Astrocyte of the cerebellum (primary cell): ENCODE measurements at regions of chr10 and their contacts with region 1.

Region 1: DNA sequence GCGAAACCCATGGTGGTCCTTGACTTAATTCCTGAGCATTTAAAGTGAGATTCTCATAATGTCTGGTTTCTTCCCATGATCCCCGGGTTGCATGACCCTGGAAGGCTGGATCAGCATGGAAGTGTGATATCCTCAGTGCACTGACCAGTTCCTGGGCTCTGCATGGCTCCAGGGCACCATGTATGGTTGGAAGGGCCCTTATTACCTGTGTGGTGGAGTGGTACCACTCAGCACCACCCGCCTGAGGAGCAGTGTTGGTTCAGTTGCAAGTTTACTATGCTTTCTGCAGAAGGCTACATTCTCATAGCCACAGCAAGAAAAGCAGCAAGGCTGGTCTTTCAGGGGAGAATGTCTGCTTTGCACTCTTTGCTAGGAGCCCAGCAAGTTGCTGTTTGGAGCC is 325.7 kb upstream of the MKI67 start:
- DNase-seq: no peak
- H3K4me3 ChIP-seq: no peak overlapping the region
- CTCF ChIP-seq: no peak

Region 2: GRCh38 chr10:128161031-128161430 is 290.8 kb before region 1 on chr10:
- in situ Hi-C with region 1: no loop called
- DNase-seq: no peak
- H3K4me3 ChIP-seq: no peak overlapping the region
- CTCF ChIP-seq: no peak

Region 3: DNA sequence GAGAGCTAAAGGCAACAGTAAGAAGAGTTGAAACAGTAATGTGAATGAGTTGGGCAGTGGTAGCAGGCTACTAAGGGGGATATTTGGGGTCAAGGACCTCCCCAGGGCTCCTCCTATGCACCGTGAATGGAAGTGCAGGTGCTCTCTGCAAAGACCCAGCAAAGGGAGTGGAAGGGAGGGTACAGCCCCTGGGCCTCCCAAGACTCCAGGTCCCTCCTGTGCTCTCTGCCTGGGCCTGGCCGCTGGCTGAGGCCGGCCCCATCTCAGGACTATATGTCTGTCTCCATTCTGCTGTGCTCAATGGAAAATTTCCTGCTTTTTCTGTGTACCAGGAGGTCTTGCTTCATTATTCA is 46.5 kb after region 1 on chr10:
- in situ Hi-C with region 1: loop called (anchors 5 kb)
- DNase-seq: no peak
- H3K4me3 ChIP-seq: no peak overlapping the region
- CTCF ChIP-seq: no peak

Region 4: DNA sequence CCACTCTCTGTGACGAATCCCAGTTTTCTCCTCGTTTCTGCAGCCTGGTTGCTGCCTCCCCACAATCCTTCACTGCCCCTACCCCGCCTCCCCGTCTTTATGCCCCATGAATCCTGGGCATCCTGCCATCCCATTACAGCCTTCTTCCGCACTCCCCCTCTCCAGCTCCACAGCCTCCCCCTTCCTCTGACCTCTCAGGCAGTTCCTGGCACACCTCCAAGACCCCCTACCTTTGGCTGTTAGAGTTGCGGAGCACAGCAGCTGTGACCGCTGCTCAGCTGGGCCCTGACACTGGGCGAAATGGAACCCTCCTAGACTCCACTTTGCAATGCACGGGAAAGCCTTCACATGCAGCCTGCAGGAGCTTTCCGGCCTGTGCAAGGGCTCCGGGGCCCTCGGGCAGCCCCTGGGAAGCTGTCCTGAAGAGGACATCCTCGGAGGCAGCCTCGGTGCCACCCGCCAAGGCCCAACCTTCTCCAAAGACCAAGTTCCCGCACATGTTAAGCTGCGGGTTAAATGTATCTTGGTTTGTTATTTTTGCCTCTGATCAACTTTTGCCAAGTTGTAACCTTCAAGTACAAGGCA is 75.0 kb after region 1 on chr10:
- in situ Hi-C with region 1: no loop called
- DNase-seq: peak; percentile 9
- H3K4me3 ChIP-seq: no peak overlapping the region
- CTCF ChIP-seq: no peak

Region 5: GRCh38 chr10:128539510-128540127 is 87.7 kb after region 1 on chr10:
- in situ Hi-C with region 1: loop called (anchors 5 kb)
- DNase-seq: no peak
- H3K4me3 ChIP-seq: no peak overlapping the region
- CTCF ChIP-seq: no peak